Activated CD4-positive, alpha-beta T cell treated with anti-CD3 and anti-CD28 coated beads, Interleukin-2, amount 10 ng/mL, durations not matched to agents 24 days and 14 days (primary cell): ENCODE measurements at regions of chr2 and their contacts with region 1.

Region 1: DNA sequence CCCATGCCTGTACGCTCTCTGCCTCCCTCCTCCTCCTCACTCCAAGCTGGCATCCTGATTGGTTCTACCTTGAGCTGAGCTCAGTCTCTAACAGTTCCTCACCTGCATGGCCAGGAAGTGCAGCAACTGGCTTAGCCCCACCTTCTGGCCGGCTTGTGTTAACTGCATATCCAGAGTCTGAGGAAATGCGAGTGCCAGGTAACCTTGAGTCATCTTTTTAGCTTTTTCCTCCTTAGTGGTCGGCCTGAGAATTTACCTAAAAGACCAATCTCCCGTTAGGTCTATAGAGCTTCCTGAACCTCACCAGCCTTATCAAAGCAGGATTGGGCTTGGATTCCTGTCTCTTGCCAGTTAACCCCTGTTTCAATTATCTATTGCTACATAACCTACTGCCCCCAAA is 89.5 kb upstream of the STK39 start:
- DNase-seq: peak; percentile 80
- H3K4me3 Mint-ChIP-seq: no peak overlapping the region
- H3K27ac Mint-ChIP-seq: no peak overlapping the region
- H3K4me1 Mint-ChIP-seq: peaks cover 6% of the 10 kb centered on the region
- H3K27me3 Mint-ChIP-seq: peaks cover 3% of the 10 kb centered on the region

Region 2: DNA sequence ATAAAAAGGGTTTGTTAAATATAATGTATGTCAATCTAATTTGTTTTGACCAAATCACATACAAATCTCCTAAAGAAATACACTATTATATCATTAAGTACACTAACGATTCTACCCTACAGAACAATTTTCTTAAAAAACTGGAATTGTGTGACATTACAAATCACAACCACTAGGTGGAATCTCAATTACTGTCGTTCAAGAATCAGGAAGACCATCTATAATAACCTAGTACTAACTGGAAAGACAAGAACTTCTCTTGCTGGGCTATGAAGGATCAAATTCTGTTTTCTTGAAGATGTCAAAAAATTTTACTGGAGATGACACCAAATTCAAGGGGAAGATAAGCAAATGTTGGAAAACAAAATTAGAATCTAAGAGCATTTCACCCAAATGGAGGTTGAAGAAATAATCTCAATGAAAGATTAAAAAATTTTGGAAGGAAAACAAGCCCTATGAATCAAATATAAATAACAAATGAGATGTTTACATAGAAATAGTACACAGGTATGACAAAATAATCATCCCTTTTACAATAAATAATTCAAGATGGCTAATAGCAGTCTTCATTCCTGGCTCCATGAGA is 200.4 kb before region 1 on chr2:
- intact Hi-C with region 1: loop called (anchors 2 kb)
- DNase-seq: no peak
- H3K4me3 Mint-ChIP-seq: no peak overlapping the region
- H3K27ac Mint-ChIP-seq: no peak overlapping the region
- H3K4me1 Mint-ChIP-seq: peaks cover 6% of the 10 kb centered on the region
- H3K27me3 Mint-ChIP-seq: no peaks in the 10 kb centered on the region

Region 3: DNA sequence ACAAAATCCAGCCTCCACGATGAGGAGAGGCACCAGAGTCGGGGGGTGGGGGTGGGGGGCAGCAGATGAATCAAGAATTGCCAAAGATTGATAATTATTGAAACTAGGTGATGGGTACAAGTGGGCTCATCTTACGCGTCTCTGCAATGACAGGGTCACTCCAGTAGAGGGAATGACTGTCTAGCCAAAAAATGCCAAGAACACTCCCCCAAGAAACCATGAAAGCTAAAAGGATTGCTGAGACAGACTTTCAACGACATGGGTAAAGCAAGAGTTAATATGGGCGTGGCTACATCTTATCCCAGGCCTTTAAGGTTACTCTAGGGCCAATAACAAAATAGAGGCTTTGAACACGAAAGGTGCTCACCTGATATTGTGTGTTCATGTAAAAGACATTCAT is 176.0 kb before region 1 on chr2:
- intact Hi-C with region 1: loop called (anchors 10 kb)
- DNase-seq: no peak
- H3K4me3 Mint-ChIP-seq: no peak overlapping the region
- H3K27ac Mint-ChIP-seq: no peak overlapping the region
- H3K4me1 Mint-ChIP-seq: peaks cover 17% of the 10 kb centered on the region
- H3K27me3 Mint-ChIP-seq: no peaks in the 10 kb centered on the region

Region 4: DNA sequence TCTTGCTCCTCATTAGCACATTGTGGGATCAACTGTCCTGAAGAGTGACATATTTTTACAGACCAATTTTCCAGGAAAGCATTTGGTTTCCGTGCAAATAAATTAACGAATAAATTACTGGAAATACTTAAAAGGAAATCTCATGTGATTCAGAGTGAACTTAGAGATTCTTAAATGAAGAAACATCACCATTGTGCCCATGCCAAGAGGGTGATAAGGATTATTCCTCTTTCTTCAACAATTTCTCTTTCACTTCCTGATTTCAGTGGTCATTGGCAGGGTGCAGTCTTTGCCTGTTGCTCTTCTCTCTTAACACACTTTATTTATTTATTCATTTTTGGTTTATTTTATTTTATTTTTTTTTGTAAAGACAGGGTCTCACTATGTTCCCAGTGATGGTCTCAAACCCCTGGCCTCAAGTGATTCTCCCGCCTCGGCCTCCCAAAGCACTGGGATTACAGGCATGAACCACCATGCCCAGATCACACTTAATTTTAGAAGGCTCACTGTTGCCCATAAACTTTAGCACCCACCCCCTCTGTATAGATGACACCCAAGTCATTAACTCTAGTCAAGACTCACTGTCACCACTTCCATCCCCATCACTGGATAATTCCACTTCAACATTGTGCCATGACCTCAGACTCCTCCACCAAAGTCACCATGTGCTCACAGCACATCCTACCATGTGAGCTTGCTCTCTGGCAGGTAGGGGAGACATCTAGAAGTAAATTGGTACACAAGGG is 26.7 kb after region 1 on chr2:
- intact Hi-C with region 1: no loop called
- DNase-seq: no peak
- H3K4me3 Mint-ChIP-seq: no peak overlapping the region
- H3K27ac Mint-ChIP-seq: no peak overlapping the region
- H3K4me1 Mint-ChIP-seq: peaks cover 5% of the 10 kb centered on the region
- H3K27me3 Mint-ChIP-seq: no peaks in the 10 kb centered on the region